ENCODE measurements at regions of chr19 and their contacts with region 1.

Region 1: GRCh38 chr19:14006243-14006765 is at the start of gene RFX1:
- DNase-seq: peak; percentile 100
- H3K4me3 Mint-ChIP-seq: peak within 1 kb of the TSS; percentile 89
- H3K27ac Mint-ChIP-seq: peak within 1 kb of the TSS; percentile 97
- H3K4me1 Mint-ChIP-seq: peaks cover 38% of the 10 kb centered on the region
- H3K27me3 Mint-ChIP-seq: no peaks in the 10 kb centered on the region
- total RNA-seq, gene RFX1: 14.4 to 15.2 TPM

Region 2: GRCh38 chr19:13888240-13888639 is 118.1 kb before region 1 on chr19:
- CTCF ChIA-PET with region 1: no interaction called
- POLR2A ChIA-PET with region 1: no interaction called
- intact Hi-C with region 1: no loop called
- DNase-seq: no peak
- H3K4me3 Mint-ChIP-seq: no peak overlapping the region
- H3K27ac Mint-ChIP-seq: no peak overlapping the region
- H3K4me1 Mint-ChIP-seq: no peaks in the 10 kb centered on the region
- H3K27me3 Mint-ChIP-seq: no peaks in the 10 kb centered on the region

Region 3: DNA sequence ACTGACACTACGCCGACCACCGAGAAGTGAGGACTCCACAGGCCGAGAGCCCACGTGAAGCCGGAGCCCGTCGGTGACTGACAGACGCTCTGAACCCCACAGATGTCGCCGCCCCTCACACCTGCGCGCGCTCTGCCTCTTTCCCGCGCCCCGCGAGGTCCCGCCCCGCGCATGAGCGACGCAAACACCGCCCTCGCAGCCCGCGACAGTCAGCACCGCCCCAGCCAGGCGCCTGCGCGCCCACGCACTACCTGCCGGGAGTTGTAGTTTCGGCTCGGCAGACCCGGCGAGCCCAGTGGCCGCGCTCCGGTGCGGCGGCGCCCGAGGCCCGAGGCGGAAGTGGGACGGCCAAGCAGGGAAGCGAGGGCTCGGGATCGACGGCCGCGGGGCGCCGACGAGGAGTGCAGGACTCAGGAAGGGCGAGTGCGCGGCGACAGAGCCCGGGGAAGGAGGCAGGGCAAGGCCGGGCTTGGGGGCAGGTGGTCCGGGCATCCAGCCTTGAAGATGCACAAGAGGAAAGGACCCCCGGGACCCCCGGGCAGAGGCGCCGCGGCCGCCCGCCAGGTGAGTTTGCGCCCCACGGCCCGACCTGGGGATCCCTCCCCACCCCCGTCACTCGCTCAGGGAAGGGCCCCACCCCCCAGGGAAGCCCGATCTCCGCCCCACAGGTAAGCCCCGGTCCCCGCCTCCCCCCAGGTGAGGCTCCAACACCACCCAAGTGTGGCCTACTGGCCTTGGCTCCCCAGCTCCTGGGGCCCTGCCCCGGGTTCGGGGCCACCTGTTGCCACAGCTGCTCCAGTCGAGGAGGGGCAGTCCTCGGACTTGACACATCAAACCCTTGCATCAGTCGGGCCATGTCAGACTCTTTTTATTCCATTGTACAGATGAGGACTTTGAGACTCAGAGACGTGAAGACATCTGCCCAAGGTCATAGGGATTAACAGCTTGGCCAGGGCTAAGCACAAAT is 100.1 kb before region 1 on chr19 and contains the starts of genes BRME1 and CC2D1A:
- CTCF ChIA-PET with region 1: interaction called, 3 read pairs
- POLR2A ChIA-PET with region 1: no interaction called
- intact Hi-C with region 1: loop called (anchors 1 kb)
- DNase-seq: peak; percentile 97
- H3K4me3 Mint-ChIP-seq: peak within 1 kb of the TSS; percentile 83
- H3K27ac Mint-ChIP-seq: peak within 1 kb of the TSS; percentile 86
- H3K4me1 Mint-ChIP-seq: peaks cover 23% of the 10 kb centered on the region
- H3K27me3 Mint-ChIP-seq: no peaks in the 10 kb centered on the region
- total RNA-seq, gene BRME1: 7.7 to 9.0 TPM
- total RNA-seq, gene CC2D1A: 25.8 to 31.0 TPM

Region 4: GRCh38 chr19:13959962-13960862 is 46.1 kb before region 1 on chr19:
- CTCF ChIA-PET with region 1: no interaction called
- POLR2A ChIA-PET with region 1: no interaction called
- intact Hi-C with region 1: no loop called
- DNase-seq: no peak
- H3K4me3 Mint-ChIP-seq: no peak overlapping the region
- H3K27ac Mint-ChIP-seq: peak overlapping the region; percentile 51
- H3K4me1 Mint-ChIP-seq: no peaks in the 10 kb centered on the region
- H3K27me3 Mint-ChIP-seq: no peaks in the 10 kb centered on the region

Region 5: GRCh38 chr19:13986348-13986904 is 19.9 kb before region 1 on chr19:
- CTCF ChIA-PET with region 1: interaction called, 7 read pairs
- POLR2A ChIA-PET with region 1: interaction called, 11 read pairs
- intact Hi-C with region 1: loop called (anchors 1 kb)
- DNase-seq: peak; percentile 100
- H3K4me3 Mint-ChIP-seq: peak overlapping the region; percentile 62
- H3K27ac Mint-ChIP-seq: peak overlapping the region; percentile 97
- H3K4me1 Mint-ChIP-seq: peaks cover 58% of the 10 kb centered on the region
- H3K27me3 Mint-ChIP-seq: no peaks in the 10 kb centered on the region

Region 6: DNA sequence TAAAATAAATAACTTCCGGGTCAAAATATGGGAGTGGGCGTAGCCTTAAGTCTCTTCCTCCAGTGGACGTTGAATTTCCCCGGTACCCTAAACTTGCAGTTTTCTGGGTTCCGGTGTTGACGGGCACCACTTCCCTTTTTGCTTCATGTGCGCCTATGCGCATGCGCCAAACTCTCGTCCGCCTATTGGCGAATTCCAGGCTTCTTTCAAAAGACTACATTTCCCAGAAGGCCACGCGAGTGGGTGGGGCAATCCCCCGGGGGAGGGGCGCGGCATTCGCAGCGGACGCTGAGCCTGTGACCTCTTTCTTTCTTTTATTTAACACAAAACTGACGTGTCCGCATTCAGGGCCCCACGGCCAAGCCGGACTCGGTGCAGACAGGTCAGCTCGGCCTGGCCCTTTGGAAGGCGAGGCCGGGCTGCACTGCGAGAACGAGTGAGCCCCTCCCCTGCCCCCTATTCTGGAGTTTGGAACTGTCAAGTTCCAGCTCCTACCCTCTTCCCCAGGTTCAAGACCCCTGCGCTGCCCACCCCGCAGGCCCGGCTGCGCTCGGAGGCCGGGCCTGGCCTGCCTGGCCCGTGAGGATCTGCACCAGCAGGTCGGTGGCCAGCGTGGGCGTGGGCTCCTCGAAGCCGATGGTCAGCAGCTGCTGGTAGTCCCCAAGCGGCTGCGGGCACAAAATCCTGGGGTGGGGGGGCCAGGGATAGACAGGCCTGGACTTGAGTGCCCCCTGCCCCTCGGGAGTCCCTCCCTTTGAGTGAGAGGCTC is 75.2 kb after region 1 on chr19:
- CTCF ChIA-PET with region 1: no interaction called
- POLR2A ChIA-PET with region 1: interaction called, 4 read pairs
- intact Hi-C with region 1: loop called (anchors 1 kb)
- DNase-seq: peak; percentile 99
- H3K4me3 Mint-ChIP-seq: peak overlapping the region; percentile 84
- H3K27ac Mint-ChIP-seq: peak overlapping the region; percentile 87
- H3K4me1 Mint-ChIP-seq: peaks cover 17% of the 10 kb centered on the region
- H3K27me3 Mint-ChIP-seq: peaks cover 2% of the 10 kb centered on the region

Region 7: GRCh38 chr19:14097532-14098151 is 91.3 kb after region 1 on chr19:
- CTCF ChIA-PET with region 1: no interaction called
- POLR2A ChIA-PET with region 1: no interaction called
- intact Hi-C with region 1: no loop called
- DNase-seq: no peak
- H3K4me3 Mint-ChIP-seq: no peak overlapping the region
- H3K27ac Mint-ChIP-seq: no peak overlapping the region
- H3K4me1 Mint-ChIP-seq: peaks cover 4% of the 10 kb centered on the region
- H3K27me3 Mint-ChIP-seq: no peaks in the 10 kb centered on the region